AG04450 (cell line): ENCODE measurements at regions of chr15 and their contacts with region 1.

Region 1: GRCh38 chr15:73972984-73973682 is 19.0 kb downstream of the STOML1 start:
- DNase-seq: peak; percentile 51
- H3K4me3 ChIP-seq: peak overlapping the region; percentile 29; the same call in 1 of the 2 replicates
- H3K27ac ChIP-seq: no peak overlapping the region
- H3K27me3 ChIP-seq: no peaks in the 10 kb centered on the region
- CTCF ChIP-seq: peak; percentile 92

Region 2: DNA sequence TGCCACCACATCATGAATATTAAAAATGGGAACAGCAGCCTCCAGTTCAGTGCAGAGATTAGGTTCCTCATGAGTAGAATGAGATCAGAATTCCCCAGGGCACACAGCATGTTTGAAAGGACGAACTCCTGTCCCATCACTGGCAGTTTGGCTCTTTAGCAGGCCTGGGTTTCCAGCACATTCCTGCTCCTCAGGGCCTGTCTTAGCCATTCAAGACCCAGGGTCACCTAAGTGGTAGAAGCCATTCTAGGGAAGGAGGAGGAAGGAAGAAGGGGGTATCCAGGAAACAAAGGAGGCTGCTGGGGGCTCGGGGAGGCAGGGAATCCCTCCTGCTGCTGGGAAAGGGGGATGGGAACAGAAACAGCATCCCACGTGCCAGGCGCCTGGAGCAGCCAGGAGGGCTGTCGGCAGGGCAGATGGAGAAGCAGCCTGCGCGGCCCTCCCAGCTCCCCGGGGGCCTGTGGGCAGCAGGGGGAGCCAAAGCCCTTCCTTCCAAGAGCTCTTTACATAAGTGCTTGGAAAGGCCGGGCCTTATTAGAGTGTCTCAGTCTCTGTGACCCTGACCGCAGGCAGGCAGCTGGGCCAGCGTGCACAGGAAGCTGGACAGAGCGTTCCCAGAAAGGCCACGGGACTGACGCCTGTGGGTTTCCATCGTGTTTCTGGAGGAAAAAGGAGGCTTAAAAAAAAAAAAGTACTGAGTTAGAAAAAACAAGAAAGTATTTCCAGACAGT is 22.1 kb before region 1 on chr15:
- CTCF ChIA-PET with region 1: interaction called, 13 read pairs
- POLR2A ChIA-PET with region 1: interaction called, 5 read pairs
- DNase-seq: peak; percentile 86
- H3K4me3 ChIP-seq: no peak overlapping the region
- H3K27ac ChIP-seq: peak overlapping the region; percentile 82
- H3K27me3 ChIP-seq: no peaks in the 10 kb centered on the region
- CTCF ChIP-seq: peak; percentile 87

Region 3: GRCh38 chr15:74011610-74012009 is 38.5 kb after region 1 on chr15:
- CTCF ChIA-PET with region 1: interaction called, 13 read pairs
- POLR2A ChIA-PET with region 1: no interaction called
- DNase-seq: no peak
- H3K4me3 ChIP-seq: no peak overlapping the region
- H3K27ac ChIP-seq: peak overlapping the region; percentile 22
- H3K27me3 ChIP-seq: no peaks in the 10 kb centered on the region
- CTCF ChIP-seq: no peak

Region 4: DNA sequence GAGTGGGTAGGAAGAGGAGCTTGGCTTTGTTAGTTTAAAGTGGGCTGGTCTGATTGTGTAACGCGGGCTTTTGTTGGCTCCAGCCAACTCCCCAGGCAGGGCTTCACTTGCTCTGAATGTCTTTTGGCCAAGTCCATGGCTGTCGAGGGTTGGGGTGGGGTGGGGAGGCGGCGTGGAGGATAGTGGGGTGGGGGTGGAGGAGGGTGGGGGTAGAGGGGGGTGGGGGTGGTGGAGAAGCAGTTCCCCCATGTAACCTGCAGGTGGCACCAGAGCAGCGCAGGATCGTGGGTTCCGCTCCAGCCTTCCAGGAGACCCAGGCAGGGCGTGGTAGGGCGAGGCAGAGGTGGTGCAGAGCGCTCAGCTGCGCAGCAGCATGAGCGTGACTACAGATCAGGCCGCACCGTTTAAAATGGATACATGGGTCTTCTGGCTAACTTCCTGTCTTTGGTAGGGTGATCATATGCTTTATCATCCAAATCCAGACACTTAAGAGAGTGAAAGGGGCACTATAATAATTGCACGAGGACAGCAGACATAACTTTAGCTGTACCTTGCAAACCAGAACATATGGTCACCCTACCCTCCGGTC is 80.9 kb after region 1 on chr15:
- CTCF ChIA-PET with region 1: interaction called, 101 read pairs
- POLR2A ChIA-PET with region 1: no interaction called
- DNase-seq: peak; percentile 20
- H3K4me3 ChIP-seq: no peak overlapping the region
- H3K27ac ChIP-seq: no peak overlapping the region
- H3K27me3 ChIP-seq: peaks cover 6% of the 10 kb centered on the region
- CTCF ChIP-seq: peak; percentile 67

Region 5: GRCh38 chr15:74307827-74308644 is 334.9 kb after region 1 on chr15:
- CTCF ChIA-PET with region 1: interaction called, 31 read pairs
- POLR2A ChIA-PET with region 1: no interaction called
- DNase-seq: no peak
- H3K4me3 ChIP-seq: no peak overlapping the region
- H3K27ac ChIP-seq: no peak overlapping the region
- H3K27me3 ChIP-seq: peaks cover 78% of the 10 kb centered on the region
- CTCF ChIP-seq: peak; percentile 82